Caco-2 (cell line): ENCODE measurements at regions of chr6 and their contacts with region 1.

Region 1: DNA sequence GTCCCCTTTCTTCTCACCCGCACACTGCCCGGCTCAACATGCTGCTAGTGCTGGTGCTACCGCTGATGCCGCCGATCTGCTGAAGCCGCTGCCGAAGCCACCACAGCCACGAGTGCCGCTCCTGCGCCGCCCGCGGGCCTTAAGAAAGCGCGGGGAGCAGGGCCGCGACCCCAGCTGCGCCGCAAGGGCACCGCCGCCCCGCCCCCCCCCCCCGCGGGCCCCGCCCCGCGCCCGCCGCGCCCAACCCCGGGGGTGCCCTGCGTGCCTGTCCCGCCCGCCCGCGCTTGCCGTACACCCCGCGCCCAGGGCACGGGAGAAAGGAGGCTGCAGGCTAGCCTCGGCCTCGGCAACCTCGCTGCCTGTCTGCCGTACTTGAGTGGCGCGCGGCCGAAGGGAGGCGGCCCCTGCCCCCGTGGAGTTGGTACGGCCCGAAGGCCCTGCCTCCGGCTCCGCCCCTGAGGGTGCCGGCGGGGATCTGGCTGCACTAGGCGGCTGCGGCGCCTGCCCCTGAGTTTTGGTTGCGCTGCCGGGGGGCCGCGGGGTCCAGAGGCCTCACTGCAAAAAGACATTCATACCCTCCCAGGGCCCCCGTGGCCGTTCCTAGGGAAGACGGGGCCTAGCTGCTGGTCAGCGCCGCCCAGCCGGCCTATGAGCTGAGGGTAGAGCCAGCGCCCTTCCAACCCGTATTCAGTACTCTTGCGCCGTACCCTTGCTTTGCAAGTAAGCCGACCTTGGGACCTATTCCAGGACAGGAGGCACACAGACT is at the start of gene SOD2:
- DNase-seq: peak; percentile 90 to 92
- H3K4me3 ChIP-seq: peak within 1 kb of the TSS; percentile 59
- H3K4me3 Mint-ChIP-seq: peak within 1 kb of the TSS; percentile 72
- H3K27ac Mint-ChIP-seq: peak within 1 kb of the TSS; percentile 80
- H3K4me1 ChIP-seq: peaks cover 4% of the 10 kb centered on the region
- H3K4me1 Mint-ChIP-seq: peaks cover 16% of the 10 kb centered on the region
- H3K27me3 ChIP-seq: no peaks in the 10 kb centered on the region
- H3K27me3 Mint-ChIP-seq: no peaks in the 10 kb centered on the region
- CTCF ChIP-seq: no peak
- total RNA-seq, gene SOD2: 109 and 110 TPM in 2 replicates

Region 2: DNA sequence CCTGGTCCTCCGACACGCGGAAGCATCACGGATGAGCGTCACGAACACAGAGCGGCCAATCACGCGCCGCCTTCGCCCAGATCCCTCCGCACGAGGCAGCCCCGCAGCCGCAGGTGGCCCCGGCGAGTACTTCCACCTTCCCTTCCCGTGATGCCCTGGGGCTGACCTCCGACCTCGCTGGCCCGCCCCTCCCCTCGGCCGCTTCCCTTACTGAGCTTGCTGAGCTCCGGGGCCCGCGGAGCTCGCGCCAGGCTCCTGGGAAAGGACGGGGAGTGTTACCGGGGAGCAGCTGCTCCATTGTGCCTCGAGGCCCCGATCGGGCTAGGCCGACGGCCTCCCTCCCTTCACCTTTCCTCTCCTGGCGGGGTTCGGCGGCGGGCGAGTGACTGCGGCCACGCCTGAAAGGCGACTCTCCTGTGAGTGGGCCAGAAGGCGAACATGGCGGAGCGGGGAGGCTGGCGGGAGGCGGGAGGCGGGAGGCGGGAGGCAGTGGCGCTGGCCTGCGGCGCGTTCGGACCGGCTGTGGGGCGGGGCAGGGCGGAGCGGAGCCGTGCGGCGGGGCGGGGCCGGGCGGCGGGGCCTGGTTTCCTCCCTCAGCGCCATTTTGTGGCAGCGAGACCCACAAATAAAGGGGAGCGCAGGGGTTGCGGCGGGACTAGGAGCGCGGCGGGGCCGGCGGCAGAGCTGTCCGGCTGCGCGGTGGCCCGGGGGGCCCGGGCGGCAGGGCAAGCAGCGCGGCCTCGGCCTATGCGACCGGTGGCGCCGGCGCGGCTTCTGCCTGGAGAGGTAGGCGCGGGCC is 33.8 kb after region 1 on chr6 and contains the start of gene WTAP:
- CTCF ChIA-PET with region 1: interaction called, 3 read pairs
- POLR2A ChIA-PET with region 1: interaction called, 36 read pairs
- intact Hi-C with region 1: loop called (anchors 1 kb)
- DNase-seq: peak; percentile 98
- H3K4me3 ChIP-seq: peak within 1 kb of the TSS; percentile 96
- H3K4me3 Mint-ChIP-seq: peak within 1 kb of the TSS; percentile 97
- H3K27ac Mint-ChIP-seq: peak within 1 kb of the TSS; percentile 96
- H3K4me1 ChIP-seq: peaks cover 3% of the 10 kb centered on the region; the same call in 1 of the 2 replicates
- H3K4me1 Mint-ChIP-seq: peaks cover 6% of the 10 kb centered on the region
- H3K27me3 ChIP-seq: no peaks in the 10 kb centered on the region
- H3K27me3 Mint-ChIP-seq: no peaks in the 10 kb centered on the region
- CTCF ChIP-seq: no peak
- total RNA-seq, gene WTAP: 109 and 114 TPM in 2 replicates

Region 3: GRCh38 chr6:159739341-159739740 is 46.0 kb after region 1 on chr6:
- CTCF ChIA-PET with region 1: no interaction called
- POLR2A ChIA-PET with region 1: no interaction called
- intact Hi-C with region 1: loop called (anchors 1 kb)
- DNase-seq: no peak
- H3K4me3 ChIP-seq: no peak overlapping the region
- H3K4me3 Mint-ChIP-seq: no peak overlapping the region
- H3K27ac Mint-ChIP-seq: no peak overlapping the region
- H3K4me1 ChIP-seq: no peaks in the 10 kb centered on the region
- H3K4me1 Mint-ChIP-seq: no peaks in the 10 kb centered on the region
- H3K27me3 ChIP-seq: no peaks in the 10 kb centered on the region
- H3K27me3 Mint-ChIP-seq: no peaks in the 10 kb centered on the region
- CTCF ChIP-seq: no peak

Region 4: GRCh38 chr6:159761873-159762680 is 68.8 kb after region 1 on chr6 and contains the start of gene ACAT2:
- CTCF ChIA-PET with region 1: interaction called, 4 read pairs
- POLR2A ChIA-PET with region 1: interaction called, 6 read pairs
- intact Hi-C with region 1: loop called (anchors 1 kb)
- DNase-seq: peak; percentile 96 to 98
- H3K4me3 ChIP-seq: peak within 1 kb of the TSS; percentile 84
- H3K4me3 Mint-ChIP-seq: peak within 1 kb of the TSS; percentile 82
- H3K27ac Mint-ChIP-seq: peak within 1 kb of the TSS; percentile 98
- H3K4me1 ChIP-seq: peaks cover 16% of the 10 kb centered on the region
- H3K4me1 Mint-ChIP-seq: peaks cover 37% of the 10 kb centered on the region
- H3K27me3 ChIP-seq: no peaks in the 10 kb centered on the region
- H3K27me3 Mint-ChIP-seq: no peaks in the 10 kb centered on the region
- CTCF ChIP-seq: no peak
- total RNA-seq, gene ACAT2: 122 and 131 TPM in 2 replicates

Region 5: DNA sequence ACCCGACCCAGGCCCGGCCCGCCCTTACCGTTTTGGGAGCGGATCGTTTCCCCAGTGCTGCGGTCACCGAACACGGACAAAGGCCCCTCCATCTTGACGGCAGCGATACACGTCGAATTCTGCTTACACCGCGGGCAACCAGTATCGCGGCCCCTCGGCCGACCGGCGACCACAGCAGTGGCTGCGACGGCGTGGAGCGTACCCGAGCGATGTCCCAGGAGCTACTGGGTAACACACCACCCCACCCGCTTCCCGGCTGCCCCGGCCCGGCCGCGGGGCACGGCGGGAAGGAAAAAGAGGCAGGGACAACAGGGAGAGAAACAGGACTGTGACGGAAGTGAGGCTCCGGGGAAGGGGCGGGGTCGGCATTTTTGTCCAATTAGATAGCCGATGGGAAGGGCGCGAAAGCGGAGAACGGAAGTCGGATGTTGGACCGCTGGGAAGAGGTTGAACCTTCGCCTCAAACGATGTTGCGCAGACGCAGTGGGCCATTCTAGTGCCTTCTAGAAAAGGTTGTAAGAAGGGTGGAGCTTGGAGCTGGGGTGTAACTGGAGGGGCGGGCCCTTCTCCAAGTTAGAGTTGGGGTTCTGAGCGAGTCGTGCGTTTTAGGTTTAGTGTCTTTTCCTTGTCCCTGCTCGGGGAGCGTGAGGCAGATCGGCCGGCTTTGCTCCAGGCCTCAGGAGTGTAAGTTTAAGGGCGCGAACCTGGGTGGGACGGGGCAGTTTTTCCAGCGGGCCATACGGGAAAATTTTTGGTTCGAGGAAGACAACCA is 96.3 kb after region 1 on chr6 and contains the start of gene TCP1:
- CTCF ChIA-PET with region 1: interaction called, 4 read pairs
- POLR2A ChIA-PET with region 1: interaction called, 4 read pairs
- intact Hi-C with region 1: loop called (anchors 1 kb)
- DNase-seq: peak; percentile 98 to 99
- H3K4me3 ChIP-seq: peak within 1 kb of the TSS; percentile 95
- H3K4me3 Mint-ChIP-seq: peak within 1 kb of the TSS; percentile 96
- H3K27ac Mint-ChIP-seq: peak within 1 kb of the TSS; percentile 98
- H3K4me1 ChIP-seq: peaks cover 18% of the 10 kb centered on the region
- H3K4me1 Mint-ChIP-seq: peaks cover 18% of the 10 kb centered on the region
- H3K27me3 ChIP-seq: no peaks in the 10 kb centered on the region
- H3K27me3 Mint-ChIP-seq: no peaks in the 10 kb centered on the region
- CTCF ChIP-seq: no peak
- total RNA-seq, gene TCP1: 286 and 333 TPM in 2 replicates

Region 6: GRCh38 chr6:159852877-159853276 is 159.6 kb after region 1 on chr6:
- CTCF ChIA-PET with region 1: no interaction called
- POLR2A ChIA-PET with region 1: no interaction called
- intact Hi-C with region 1: loop called (anchors 5 kb)
- DNase-seq: peak in 1 of 2 experiments; percentile 32
- H3K4me3 ChIP-seq: no peak overlapping the region
- H3K4me3 Mint-ChIP-seq: no peak overlapping the region
- H3K27ac Mint-ChIP-seq: no peak overlapping the region
- H3K4me1 ChIP-seq: no peaks in the 10 kb centered on the region
- H3K4me1 Mint-ChIP-seq: no peaks in the 10 kb centered on the region
- H3K27me3 ChIP-seq: no peaks in the 10 kb centered on the region
- H3K27me3 Mint-ChIP-seq: peaks cover 8% of the 10 kb centered on the region
- CTCF ChIP-seq: peak in 1 of 2 experiments; percentile 21

Region 7: DNA sequence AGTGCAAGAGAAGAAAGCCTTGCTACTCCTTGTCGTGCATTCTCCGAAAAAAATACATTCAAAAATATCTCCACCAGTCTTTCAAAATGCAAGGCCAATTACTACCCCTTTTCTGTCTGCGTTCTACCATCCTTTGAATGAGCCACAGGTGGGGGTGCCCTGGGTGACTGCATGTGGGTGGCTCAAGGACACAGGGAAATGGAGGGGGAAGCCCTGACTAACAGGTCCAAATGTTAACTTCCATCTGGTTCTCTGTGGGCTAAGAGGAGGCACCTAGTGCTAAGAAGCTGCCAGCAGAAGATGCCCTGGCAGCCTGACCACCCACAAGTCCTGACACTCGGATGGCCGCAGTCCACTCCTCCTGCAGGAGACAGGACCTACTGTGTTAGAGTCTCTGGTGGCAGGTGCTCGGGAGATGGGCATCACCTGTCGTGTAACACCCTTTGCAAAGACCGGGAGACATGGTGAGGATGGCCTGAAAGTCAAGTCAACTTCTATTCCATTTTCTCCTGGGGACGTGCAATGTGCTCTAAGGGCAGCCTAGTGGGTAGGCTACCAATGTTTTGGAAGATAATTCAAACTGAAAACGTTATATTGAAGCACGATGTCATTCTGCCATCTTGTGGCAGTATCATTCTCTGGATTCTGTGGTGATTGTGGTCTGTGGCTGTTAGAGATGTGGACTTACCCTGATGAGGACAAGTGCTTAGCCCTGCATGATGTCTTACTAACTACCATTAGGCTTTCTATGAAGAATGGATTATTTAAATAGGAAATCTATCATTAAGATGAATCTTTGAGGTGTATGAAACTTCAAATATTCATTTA is 248.2 kb after region 1 on chr6:
- CTCF ChIA-PET with region 1: no interaction called
- POLR2A ChIA-PET with region 1: no interaction called
- intact Hi-C with region 1: loop called (anchors 1 kb)
- DNase-seq: peak in 1 of 2 experiments; percentile 27
- H3K4me3 ChIP-seq: no peak overlapping the region
- H3K4me3 Mint-ChIP-seq: no peak overlapping the region
- H3K27ac Mint-ChIP-seq: no peak overlapping the region
- H3K4me1 ChIP-seq: no peaks in the 10 kb centered on the region
- H3K4me1 Mint-ChIP-seq: peaks cover 6% of the 10 kb centered on the region
- H3K27me3 ChIP-seq: no peaks in the 10 kb centered on the region
- H3K27me3 Mint-ChIP-seq: peaks cover 12% of the 10 kb centered on the region
- CTCF ChIP-seq: peak; percentile 35 to 39